ENCODE measurements at regions of chr3 and their contacts with region 1.

Region 1: DNA sequence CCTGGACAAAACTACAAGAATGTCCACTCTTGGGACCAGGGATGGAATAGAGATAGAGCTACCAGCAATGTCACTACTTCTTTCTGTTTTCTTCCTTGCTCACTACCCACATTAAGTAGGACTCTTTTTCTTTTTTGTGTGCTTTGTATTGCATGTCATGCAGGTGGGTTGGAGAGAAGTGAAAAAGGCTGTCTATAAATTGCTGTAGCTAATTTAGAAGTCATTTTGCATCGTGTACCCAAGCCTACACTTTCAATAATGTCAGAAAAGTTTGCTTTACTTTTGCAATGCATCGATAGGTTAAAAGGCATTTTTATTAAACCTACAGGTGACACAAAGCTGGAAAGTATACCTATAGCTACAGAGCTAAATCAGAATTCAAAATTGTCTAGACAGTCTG is 58.9 kb downstream of the GTF2E1 start:
- DNase-seq: peak; percentile 76
- H3K4me3 ChIP-seq: peak overlapping the region; percentile 49
- H3K27ac ChIP-seq: peak overlapping the region; percentile 86
- H3K4me1 ChIP-seq: peaks cover 55% of the 10 kb centered on the region
- CTCF ChIP-seq: no peak

Region 2: GRCh38 chr3:120816728-120817127 is 15.2 kb after region 1 on chr3:
- CTCF ChIA-PET with region 1: no interaction called
- POLR2A ChIA-PET with region 1: interaction called, 18 read pairs
- intact Hi-C with region 1: no loop called
- DNase-seq: no peak
- H3K4me3 ChIP-seq: no peak overlapping the region
- H3K27ac ChIP-seq: no peak overlapping the region
- H3K4me1 ChIP-seq: no peaks in the 10 kb centered on the region
- CTCF ChIP-seq: no peak

Measured in OCI-LY7 (cell line).